ENCODE measurements at regions of chr7 and their contacts with region 1.

Region 1: DNA sequence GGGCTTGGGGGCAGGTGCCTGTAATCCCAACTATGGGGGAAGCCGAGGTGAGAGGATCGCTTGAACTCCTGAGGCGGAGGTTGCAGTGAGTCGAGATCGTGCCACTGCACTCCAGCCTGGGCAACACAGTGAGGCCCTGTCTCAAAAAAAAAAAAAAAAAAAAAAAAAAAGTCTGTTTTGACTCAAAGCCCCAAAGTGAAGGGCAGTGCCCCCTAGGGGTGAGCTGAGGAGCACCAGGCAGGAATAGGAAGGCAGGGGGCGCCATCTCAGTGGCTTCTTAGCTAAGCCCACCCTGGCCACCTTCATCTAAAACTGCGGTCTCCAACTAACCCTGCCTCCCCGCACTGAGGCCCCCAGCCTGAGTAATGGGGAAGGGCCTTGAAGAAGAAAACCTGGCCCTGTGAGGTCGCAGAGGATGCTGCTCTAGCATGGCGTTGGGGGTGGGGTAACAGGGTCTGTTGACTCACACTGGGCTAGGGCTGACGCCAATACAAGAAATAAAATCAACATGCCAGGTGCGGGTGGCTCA is 9.8 kb downstream of the PODXL start:
- DNase-seq: peak; percentile 84
- H3K4me3 ChIP-seq: no peak overlapping the region; a peak in 1 of 4 replicates
- H3K27ac ChIP-seq: peak overlapping the region in 1 of 2 experiments; percentile 3; a peak in 1 of 4 replicates
- H3K4me1 ChIP-seq: peaks cover 24 to 26% of the 10 kb centered on the region in 2 experiments
- H3K27me3 ChIP-seq: no peaks in the 10 kb centered on the region
- CTCF ChIP-seq: peak; percentile 99
- EP300 ChIP-seq: no peak
- RAD21 ChIP-seq: peak; percentile 58

Region 2: DNA sequence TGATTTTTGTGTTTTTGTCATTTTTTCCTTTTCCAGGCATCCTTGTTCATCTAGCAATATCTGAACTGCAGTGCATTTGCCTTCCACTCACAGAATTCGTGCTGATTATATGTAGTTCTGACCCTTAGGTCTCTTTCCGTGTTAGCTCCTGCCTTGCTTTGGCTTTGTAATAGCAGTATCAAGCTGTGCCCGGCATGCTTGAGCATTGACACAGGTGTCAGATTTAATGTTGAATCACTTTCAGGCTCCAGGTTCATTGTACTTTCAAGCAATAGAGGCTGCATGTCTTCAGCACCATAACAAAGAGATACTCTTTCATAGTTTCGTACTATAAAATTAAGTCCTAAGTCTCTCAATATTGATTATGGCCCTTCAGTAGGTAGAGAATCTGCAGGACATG is 75.0 kb before region 1 on chr7:
- CTCF ChIA-PET with region 1: no interaction called
- POLR2A ChIA-PET with region 1: no interaction called
- DNase-seq: no peak
- H3K4me3 ChIP-seq: no peak overlapping the region
- H3K27ac ChIP-seq: no peak overlapping the region
- H3K4me1 ChIP-seq: no peaks in the 10 kb centered on the region
- H3K27me3 ChIP-seq: no peaks in the 10 kb centered on the region
- CTCF ChIP-seq: no peak
- EP300 ChIP-seq: no peak
- RAD21 ChIP-seq: no peak

Region 3: GRCh38 chr7:131507592-131508331 is 38.9 kb before region 1 on chr7:
- CTCF ChIA-PET with region 1: interaction called, 95 read pairs
- POLR2A ChIA-PET with region 1: no interaction called
- DNase-seq: peak; percentile 88
- H3K4me3 ChIP-seq: no peak overlapping the region
- H3K27ac ChIP-seq: peak overlapping the region in 1 of 2 experiments; percentile 29; a peak in 2 of 4 replicates
- H3K4me1 ChIP-seq: peaks cover 9 to 20% of the 10 kb centered on the region in 2 experiments; a peak in 3 of 4 replicates
- H3K27me3 ChIP-seq: no peaks in the 10 kb centered on the region
- CTCF ChIP-seq: peak; percentile 100
- EP300 ChIP-seq: no peak
- RAD21 ChIP-seq: peak; percentile 95

Region 4: GRCh38 chr7:131527456-131527855 is 19.2 kb before region 1 on chr7:
- CTCF ChIA-PET with region 1: interaction called, 38 read pairs
- POLR2A ChIA-PET with region 1: no interaction called
- DNase-seq: no peak
- H3K4me3 ChIP-seq: no peak overlapping the region
- H3K27ac ChIP-seq: no peak overlapping the region
- H3K4me1 ChIP-seq: no peaks in the 10 kb centered on the region
- H3K27me3 ChIP-seq: no peaks in the 10 kb centered on the region
- CTCF ChIP-seq: no peak
- EP300 ChIP-seq: no peak
- RAD21 ChIP-seq: no peak

Region 5: DNA sequence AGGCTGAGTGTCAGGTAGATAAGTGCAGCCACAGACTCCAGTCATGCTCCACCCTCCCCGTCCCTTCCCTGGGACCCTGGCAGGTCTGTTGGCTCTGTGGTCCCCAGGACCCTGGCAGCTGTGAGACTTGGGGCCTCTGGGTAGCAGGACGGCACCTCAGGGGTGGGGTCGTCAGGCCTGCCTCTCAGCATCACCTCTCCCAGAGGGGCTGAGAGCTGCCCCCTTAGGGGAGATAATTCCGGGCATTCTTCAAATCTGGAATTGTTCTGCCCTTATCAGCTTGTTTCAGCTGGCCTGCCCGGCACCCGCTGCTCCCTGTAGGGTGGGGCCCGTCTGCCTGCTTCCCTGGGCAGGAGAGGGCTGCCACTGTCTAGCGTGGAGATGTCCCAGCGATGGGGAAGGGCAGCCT is 13.5 kb before region 1 on chr7:
- CTCF ChIA-PET with region 1: interaction called, 38 read pairs
- POLR2A ChIA-PET with region 1: no interaction called
- DNase-seq: no peak
- H3K4me3 ChIP-seq: no peak overlapping the region
- H3K27ac ChIP-seq: no peak overlapping the region
- H3K4me1 ChIP-seq: peaks cover 7 to 23% of the 10 kb centered on the region in 2 experiments; a peak in 3 of 4 replicates
- H3K27me3 ChIP-seq: no peaks in the 10 kb centered on the region
- CTCF ChIP-seq: no peak
- EP300 ChIP-seq: no peak
- RAD21 ChIP-seq: no peak

Region 6: GRCh38 chr7:131625817-131626372 is 79.2 kb after region 1 on chr7:
- CTCF ChIA-PET with region 1: interaction called, 13 read pairs
- POLR2A ChIA-PET with region 1: no interaction called
- DNase-seq: peak; percentile 56
- H3K4me3 ChIP-seq: no peak overlapping the region
- H3K27ac ChIP-seq: peak overlapping the region; percentile 39 to 93; a peak in 3 of 4 replicates
- H3K4me1 ChIP-seq: peaks cover 18 to 51% of the 10 kb centered on the region in 2 experiments; a peak in 3 of 4 replicates
- H3K27me3 ChIP-seq: no peaks in the 10 kb centered on the region
- CTCF ChIP-seq: peak; percentile 42
- EP300 ChIP-seq: peak in 1 of 2 experiments; percentile 97; a peak in 2 of 4 replicates
- RAD21 ChIP-seq: no peak

Region 7: GRCh38 chr7:131633342-131633843 is 86.7 kb after region 1 on chr7:
- CTCF ChIA-PET with region 1: interaction called, 25 read pairs
- POLR2A ChIA-PET with region 1: no interaction called
- DNase-seq: no peak
- H3K4me3 ChIP-seq: no peak overlapping the region
- H3K27ac ChIP-seq: peak overlapping the region in 1 of 2 experiments; percentile 86; a peak in 3 of 4 replicates
- H3K4me1 ChIP-seq: peaks cover 7 to 33% of the 10 kb centered on the region in 2 experiments; a peak in 3 of 4 replicates
- H3K27me3 ChIP-seq: no peaks in the 10 kb centered on the region
- CTCF ChIP-seq: no peak
- EP300 ChIP-seq: peak in 1 of 2 experiments; percentile 84; a peak in 1 of 4 replicates
- RAD21 ChIP-seq: no peak